Tibial artery (tissue), 4 donors: ENCODE measurements at regions of chr16 and their contacts with region 1.

Region 1: DNA sequence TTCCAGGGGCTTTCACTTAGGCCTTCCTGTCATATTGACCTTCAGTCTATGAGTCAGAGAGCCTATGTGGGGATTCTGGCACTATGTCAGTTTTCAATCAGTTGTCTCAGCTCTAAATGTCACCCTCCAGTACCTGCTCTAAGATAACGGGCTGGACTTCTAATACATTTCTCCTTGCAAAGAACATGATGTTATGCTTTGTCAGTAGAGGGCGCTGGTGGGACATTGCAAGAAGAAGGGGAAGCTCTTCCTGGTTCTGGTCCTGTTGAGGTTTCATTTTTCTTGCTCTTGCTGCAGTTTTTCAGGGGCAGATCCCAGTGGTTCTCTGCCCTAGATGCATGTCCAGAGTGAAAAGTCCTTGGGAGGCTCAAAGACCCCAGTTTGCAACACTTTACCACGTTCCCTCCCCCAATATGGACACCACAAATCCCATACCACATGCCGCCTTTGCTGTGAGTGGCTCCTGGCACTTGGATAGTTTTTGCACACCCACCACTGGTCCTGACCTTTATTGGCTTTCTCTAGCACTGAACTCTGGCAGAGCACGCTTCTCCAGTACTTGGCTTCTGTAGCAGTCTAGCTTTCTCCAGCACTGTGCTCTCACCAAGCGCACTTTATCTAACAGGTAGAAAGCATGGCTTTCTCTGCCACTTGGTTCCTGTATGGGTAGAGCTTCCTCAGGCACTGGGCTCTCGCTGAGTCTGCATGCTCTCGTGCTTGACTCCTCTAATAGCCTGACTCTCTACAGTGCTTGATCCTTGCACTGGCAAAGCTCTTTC is 49.0 kb downstream of the BCL7C start:
- DNase-seq: peak; percentile 72 to 75
- H3K4me3 ChIP-seq: peak overlapping the region; percentile 33 to 37
- H3K27ac ChIP-seq: peak overlapping the region; percentile 52 to 65
- H3K4me1 ChIP-seq: peaks cover 0 to 10% (median 8%) of the 10 kb centered on the region in 4 donors
- H3K27me3 ChIP-seq: no peaks in the 10 kb centered on the region
- CTCF ChIP-seq: peak; percentile 91

Region 2: DNA sequence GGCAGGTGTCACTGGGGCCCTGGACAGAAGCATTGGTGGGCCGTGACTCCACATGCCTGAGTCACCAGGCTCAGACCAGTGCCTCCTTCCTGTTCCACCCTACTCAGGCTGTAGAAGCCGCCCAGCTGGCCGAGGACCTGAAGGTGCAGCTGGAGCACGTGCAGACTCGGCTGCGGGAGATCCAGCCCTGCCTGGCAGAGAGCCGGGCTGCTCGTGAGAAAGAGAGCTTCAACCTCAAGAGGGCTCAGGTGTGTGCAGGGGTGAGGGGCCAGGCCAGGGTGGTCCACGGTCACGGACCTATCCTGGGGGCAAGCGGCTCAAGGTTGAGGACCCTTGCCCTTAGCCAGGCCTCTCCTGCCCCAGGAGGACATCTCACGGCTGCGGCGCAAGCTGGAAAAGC is 73.1 kb before region 1 on chr16:
- intact Hi-C with region 1: loop called (anchors 2 kb)
- DNase-seq: no peak
- H3K4me3 ChIP-seq: no peak overlapping the region
- H3K27ac ChIP-seq: no peak overlapping the region
- H3K4me1 ChIP-seq: peaks cover 0 to 23% (median 13%) of the 10 kb centered on the region in 4 donors
- H3K27me3 ChIP-seq: no peaks in the 10 kb centered on the region
- CTCF ChIP-seq: no peak

Region 3: GRCh38 chr16:30902029-30902972 is 57.4 kb after region 1 on chr16:
- intact Hi-C with region 1: loop called (anchors 5 kb)
- DNase-seq: peak; percentile 39 to 80
- H3K4me3 ChIP-seq: peak overlapping the region; percentile 52 to 55
- H3K27ac ChIP-seq: peak overlapping the region; percentile 79 to 86
- H3K4me1 ChIP-seq: peaks cover 0 to 21% (median 10%) of the 10 kb centered on the region in 4 donors
- H3K27me3 ChIP-seq: no peaks in the 10 kb centered on the region
- CTCF ChIP-seq: peak in 1 of 2 experiments; percentile 84

Region 4: GRCh38 chr16:30922960-30923535 is 78.2 kb after region 1 on chr16:
- intact Hi-C with region 1: loop called (anchors 5 kb)
- DNase-seq: peak; percentile 100
- H3K4me3 ChIP-seq: peak overlapping the region; percentile 82 to 97
- H3K27ac ChIP-seq: peak overlapping the region; percentile 89 to 98
- H3K4me1 ChIP-seq: peaks cover 0 to 38% (median 22%) of the 10 kb centered on the region in 4 donors
- H3K27me3 ChIP-seq: no peaks in the 10 kb centered on the region
- CTCF ChIP-seq: no peak

Region 5: GRCh38 chr16:31344712-31345111 is 499.9 kb after region 1 on chr16:
- intact Hi-C with region 1: no loop called
- DNase-seq: peak in 1 of 2 donors; percentile 35
- H3K4me3 ChIP-seq: no peak overlapping the region
- H3K27ac ChIP-seq: no peak overlapping the region
- H3K4me1 ChIP-seq: no peaks in the 10 kb centered on the region
- H3K27me3 ChIP-seq: peaks cover 0 to under 1% of the 10 kb centered on the region in 2 donors
- CTCF ChIP-seq: no peak